ENCODE measurements at regions of chr7 and their contacts with region 1.

Region 1: GRCh38 chr7:148368562-148368961 is 222.0 kb upstream of the C7orf33 start:
- DNase-seq: no peak
- ATAC-seq: no peak
- H3K4me3 Mint-ChIP-seq: no peak overlapping the region
- H3K27ac Mint-ChIP-seq: no peak overlapping the region
- H3K4me1 Mint-ChIP-seq: peaks cover 8% of the 10 kb centered on the region
- H3K27me3 Mint-ChIP-seq: no peaks in the 10 kb centered on the region
- CTCF ChIP-seq: no peak

Region 2: GRCh38 chr7:148419856-148420832 is 51.6 kb after region 1 on chr7:
- CTCF ChIA-PET with region 1: no interaction called
- POLR2A ChIA-PET with region 1: interaction called, 12 read pairs
- DNase-seq: no peak
- ATAC-seq: no peak
- H3K4me3 Mint-ChIP-seq: no peak overlapping the region
- H3K27ac Mint-ChIP-seq: no peak overlapping the region
- H3K4me1 Mint-ChIP-seq: no peaks in the 10 kb centered on the region
- H3K27me3 Mint-ChIP-seq: no peaks in the 10 kb centered on the region
- CTCF ChIP-seq: no peak

Measured in WTC11 (cell line).